MCF 10A (cell line): ENCODE measurements at regions of chr5 and their contacts with region 1.

Region 1: DNA sequence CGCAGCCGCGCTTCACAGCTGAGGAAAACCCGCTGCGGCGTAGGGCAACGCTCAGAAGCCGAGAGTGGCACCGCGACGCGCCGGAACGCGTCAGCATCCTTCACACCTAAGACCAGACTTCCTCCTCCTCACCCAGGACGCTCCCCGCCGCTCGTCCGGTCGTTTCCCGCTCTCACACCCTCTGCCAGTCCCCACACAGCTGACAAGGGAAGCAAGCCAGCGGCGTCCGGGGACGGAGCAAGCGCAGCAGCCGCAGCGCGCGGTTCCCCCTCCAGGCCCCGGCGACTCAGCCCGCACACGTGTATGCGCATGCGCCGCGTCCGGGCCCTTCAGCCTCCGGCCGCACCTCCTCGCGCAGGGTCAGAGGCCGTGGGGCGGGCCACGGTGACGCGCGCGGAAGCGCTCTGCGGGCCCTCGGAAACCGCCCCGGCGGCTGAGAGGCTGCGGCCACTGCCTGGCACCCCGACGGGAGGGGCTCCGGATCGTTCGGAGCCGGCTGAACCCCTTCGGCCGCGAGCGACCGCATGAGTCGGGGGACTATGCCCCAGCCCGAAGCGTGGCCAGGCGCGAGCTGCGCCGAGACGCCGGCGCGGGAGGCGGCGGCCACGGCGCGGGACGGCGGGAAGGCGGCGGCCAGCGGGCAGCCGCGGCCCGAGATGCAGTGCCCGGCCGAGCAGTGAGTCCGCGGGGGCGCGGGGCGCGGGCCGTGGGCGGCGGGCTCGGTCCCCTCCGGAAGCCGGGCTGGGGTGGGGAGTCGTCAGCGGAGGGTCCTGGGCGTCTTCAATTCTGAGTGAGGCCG is at the start of gene OTULIN:
- DNase-seq: peak; percentile 86
- H3K4me3 Mint-ChIP-seq: peak within 1 kb of the TSS; percentile 97
- H3K27ac Mint-ChIP-seq: peak within 1 kb of the TSS; percentile 97
- H3K4me1 Mint-ChIP-seq: peaks cover 43% of the 10 kb centered on the region
- H3K27me3 Mint-ChIP-seq: no peaks in the 10 kb centered on the region
- CTCF ChIP-seq: no peak
- total RNA-seq, gene OTULIN: 27.0 and 34.6 TPM in 2 replicates

Region 2: DNA sequence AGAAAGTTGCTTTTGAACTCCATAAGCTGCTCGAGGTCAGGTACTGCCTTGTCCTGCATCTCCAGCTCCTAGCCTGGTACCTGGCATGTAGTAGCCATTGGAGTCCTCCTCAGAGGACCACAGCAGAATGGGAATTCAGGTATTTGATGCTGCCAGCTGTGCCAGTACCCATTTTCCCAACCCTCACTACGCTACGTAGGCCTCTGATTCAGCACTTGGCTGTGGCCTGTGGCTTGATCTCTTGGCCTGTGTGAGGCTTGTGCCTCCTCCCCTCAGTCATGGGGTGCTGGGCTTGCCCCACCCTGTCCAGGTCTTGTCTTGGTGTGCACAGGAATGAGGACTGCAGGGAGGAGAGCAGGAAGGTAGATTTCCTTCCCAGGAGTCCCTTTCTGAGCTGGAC is 11.8 kb after region 1 on chr5:
- CTCF ChIA-PET with region 1: interaction called, 11 read pairs
- POLR2A ChIA-PET with region 1: interaction called, 23 read pairs
- intact Hi-C with region 1: no loop called
- DNase-seq: peak; percentile 76
- H3K4me3 Mint-ChIP-seq: peak overlapping the region; percentile 26
- H3K27ac Mint-ChIP-seq: peak overlapping the region; percentile 86
- H3K4me1 Mint-ChIP-seq: peaks cover 51% of the 10 kb centered on the region
- H3K27me3 Mint-ChIP-seq: no peaks in the 10 kb centered on the region
- CTCF ChIP-seq: no peak

Region 3: DNA sequence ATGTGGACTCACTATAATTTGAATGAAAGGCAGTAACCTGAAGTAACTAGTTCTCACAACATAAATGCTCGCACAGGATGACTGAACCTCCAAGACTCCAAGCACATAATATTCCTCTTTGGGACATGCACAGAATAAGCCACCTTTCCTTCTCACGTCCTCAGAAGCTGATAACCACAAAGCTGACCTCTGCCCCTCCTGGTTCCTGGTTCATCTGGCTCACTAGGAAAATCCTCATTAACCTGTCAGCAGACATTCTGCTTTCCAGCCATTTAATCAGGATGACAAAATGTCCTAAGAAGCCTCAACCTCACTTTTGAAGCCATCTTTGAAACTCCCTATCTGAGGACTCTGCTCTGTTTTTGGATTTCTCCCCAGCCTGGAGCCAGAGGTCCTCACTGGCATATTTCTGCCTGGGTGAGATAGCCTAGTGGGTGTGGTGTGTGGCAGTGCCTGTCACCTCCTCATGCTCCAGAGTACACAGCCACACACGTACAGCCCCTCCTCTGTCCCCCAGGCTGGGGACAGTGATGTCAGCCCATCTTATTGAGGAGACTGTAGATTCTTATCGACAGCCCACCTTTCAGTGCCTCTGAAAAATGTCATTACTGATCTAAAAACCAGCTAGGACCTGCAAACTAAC is 196.7 kb after region 1 on chr5:
- CTCF ChIA-PET with region 1: no interaction called
- POLR2A ChIA-PET with region 1: no interaction called
- intact Hi-C with region 1: no loop called
- DNase-seq: no peak
- H3K4me3 Mint-ChIP-seq: no peak overlapping the region
- H3K27ac Mint-ChIP-seq: no peak overlapping the region
- H3K4me1 Mint-ChIP-seq: peaks cover 27% of the 10 kb centered on the region
- H3K27me3 Mint-ChIP-seq: no peaks in the 10 kb centered on the region
- CTCF ChIP-seq: no peak